ENCODE measurements at regions of chr1 and their contacts with region 1.

Region 1: DNA sequence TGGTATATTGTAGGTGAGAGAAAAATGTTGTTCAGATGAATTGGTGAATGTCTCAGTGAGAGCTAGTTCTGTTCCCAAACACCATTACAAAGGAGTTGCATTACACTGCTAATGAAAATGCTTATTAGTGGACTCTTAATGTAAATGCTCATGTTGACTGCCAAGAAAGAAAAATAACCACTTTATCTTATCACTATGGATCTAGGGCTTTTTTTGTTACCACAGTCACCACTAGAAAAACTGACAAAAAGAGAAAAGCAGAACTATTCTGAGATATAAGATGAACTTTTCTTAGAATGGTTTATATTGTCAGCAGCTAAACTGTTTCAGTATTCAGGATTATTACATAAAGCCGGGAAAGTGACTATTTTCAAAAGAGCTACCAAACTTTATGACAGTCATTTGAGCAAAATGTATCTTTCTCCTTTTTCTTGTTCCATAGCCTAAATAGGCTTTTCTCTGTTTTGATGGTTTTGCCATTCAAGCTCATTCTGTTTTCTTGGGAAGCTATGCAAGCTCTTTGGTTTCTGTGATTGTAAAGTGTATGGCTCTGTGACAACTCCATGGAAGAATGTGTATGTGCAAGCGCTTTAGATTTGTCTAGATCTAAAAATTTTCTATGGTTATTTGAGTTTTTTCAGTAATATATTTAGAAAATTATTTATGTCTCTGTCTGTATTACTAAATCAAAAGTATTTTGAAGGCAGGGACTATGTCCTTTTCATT is 64.2 kb upstream of the DPH5 start:
- DNase-seq: no peak
- H3K4me3 ChIP-seq: no peak overlapping the region
- H3K4me3 Mint-ChIP-seq: no peak overlapping the region
- H3K27ac ChIP-seq: no peak overlapping the region
- H3K27ac Mint-ChIP-seq: peak overlapping the region in 6 of 8 donors; percentile 0 to 70 (median 14)
- H3K4me1 ChIP-seq: peaks cover 7% of the 10 kb centered on the region
- H3K4me1 Mint-ChIP-seq: peaks cover 6 to 35% (median 18%) of the 10 kb centered on the region in 3 donors
- H3K27me3 ChIP-seq: no peaks in the 10 kb centered on the region
- H3K27me3 Mint-ChIP-seq: no peaks in the 10 kb centered on the region

Region 2: DNA sequence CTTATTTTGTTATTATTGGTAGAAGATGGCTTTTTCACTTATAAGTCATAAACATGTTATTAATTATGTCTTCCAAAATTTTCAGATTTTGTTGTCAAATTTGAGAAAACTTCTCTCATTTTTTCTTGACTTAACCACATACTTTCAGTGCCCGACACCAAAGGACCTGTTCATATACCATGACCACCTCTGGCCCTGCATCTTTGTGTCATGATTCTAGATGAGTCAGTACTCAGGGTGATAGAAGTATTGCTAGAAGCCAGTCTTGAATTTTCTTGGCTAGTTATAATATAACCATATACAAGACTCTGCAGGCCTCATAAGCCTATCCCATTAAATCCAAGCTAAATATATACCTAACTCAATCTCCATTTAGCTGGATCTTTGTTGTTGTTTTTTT is 28.8 kb before region 1 on chr1:
- CTCF ChIA-PET with region 1: no interaction called
- POLR2A ChIA-PET with region 1: no interaction called
- DNase-seq: no peak
- H3K4me3 ChIP-seq: no peak overlapping the region
- H3K4me3 Mint-ChIP-seq: no peak overlapping the region
- H3K27ac ChIP-seq: no peak overlapping the region
- H3K27ac Mint-ChIP-seq: no peak overlapping the region
- H3K4me1 ChIP-seq: peaks cover 4% of the 10 kb centered on the region
- H3K4me1 Mint-ChIP-seq: peaks cover 24 to 48% (median 36%) of the 10 kb centered on the region in 3 donors
- H3K27me3 ChIP-seq: no peaks in the 10 kb centered on the region
- H3K27me3 Mint-ChIP-seq: peaks cover 0 to 2% of the 10 kb centered on the region in 2 donors

Region 3: DNA sequence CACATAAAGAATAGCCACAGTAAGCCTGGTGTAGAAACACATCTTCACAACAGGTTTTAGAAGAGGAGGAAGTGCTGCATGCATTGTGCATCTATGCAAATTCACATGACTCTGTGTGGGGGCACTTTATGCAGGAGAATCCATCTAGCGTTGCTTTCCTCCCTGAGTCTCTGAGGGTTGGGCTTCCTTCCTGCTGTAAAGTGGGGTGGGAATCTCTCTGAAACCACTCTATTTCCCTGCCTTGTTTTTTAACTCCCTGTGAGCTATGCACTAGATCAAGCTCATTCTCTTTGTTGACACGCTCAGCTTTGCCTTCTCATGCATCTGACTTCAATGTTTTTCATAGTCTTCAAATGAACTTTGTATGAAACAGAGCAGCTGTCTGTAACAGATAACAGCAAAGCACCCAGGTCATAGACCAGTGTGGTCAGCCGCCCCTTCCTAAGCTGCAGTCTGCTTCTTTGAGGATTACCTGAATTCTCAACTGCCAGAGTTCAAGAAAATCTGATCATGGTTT is 38.5 kb after region 1 on chr1:
- CTCF ChIA-PET with region 1: no interaction called
- POLR2A ChIA-PET with region 1: interaction called, 11 read pairs
- DNase-seq: peak in 2 of 5 donors; percentile 24 to 72
- H3K4me3 ChIP-seq: peak overlapping the region; percentile 17
- H3K4me3 Mint-ChIP-seq: peak overlapping the region; percentile 15 to 82 (median 68)
- H3K27ac ChIP-seq: peak overlapping the region; percentile 26
- H3K27ac Mint-ChIP-seq: peak overlapping the region; percentile 82 to 97 (median 90)
- H3K4me1 ChIP-seq: peaks cover 53% of the 10 kb centered on the region
- H3K4me1 Mint-ChIP-seq: peaks cover 49 to 67% (median 67%) of the 10 kb centered on the region in 3 donors
- H3K27me3 ChIP-seq: no peaks in the 10 kb centered on the region
- H3K27me3 Mint-ChIP-seq: no peaks in the 10 kb centered on the region

Region 4: DNA sequence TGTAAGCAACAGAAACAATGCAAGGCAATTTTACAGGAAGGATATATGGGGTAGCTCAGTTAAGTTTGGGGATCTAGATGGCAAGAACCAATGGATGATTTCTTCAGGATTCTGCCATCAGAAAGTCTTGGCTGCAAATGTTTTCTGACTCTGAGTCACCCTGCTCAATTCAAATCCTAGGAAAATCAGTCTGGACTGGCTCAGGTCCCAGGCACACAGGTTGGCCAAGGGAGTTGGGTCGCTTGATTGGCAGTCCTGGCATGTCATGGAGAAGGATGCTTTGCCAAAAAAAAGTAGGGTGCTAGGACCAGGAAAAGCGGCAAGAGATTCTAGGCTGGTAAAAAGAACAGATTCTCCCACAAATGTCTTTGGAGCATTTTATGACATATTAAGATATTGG is 118.1 kb after region 1 on chr1:
- CTCF ChIA-PET with region 1: no interaction called
- POLR2A ChIA-PET with region 1: no interaction called
- DNase-seq: no peak
- H3K4me3 ChIP-seq: no peak overlapping the region
- H3K4me3 Mint-ChIP-seq: no peak overlapping the region
- H3K27ac ChIP-seq: no peak overlapping the region
- H3K27ac Mint-ChIP-seq: no peak overlapping the region
- H3K4me1 ChIP-seq: no peaks in the 10 kb centered on the region
- H3K4me1 Mint-ChIP-seq: no peaks in the 10 kb centered on the region
- H3K27me3 ChIP-seq: no peaks in the 10 kb centered on the region
- H3K27me3 Mint-ChIP-seq: no peaks in the 10 kb centered on the region

Region 5: DNA sequence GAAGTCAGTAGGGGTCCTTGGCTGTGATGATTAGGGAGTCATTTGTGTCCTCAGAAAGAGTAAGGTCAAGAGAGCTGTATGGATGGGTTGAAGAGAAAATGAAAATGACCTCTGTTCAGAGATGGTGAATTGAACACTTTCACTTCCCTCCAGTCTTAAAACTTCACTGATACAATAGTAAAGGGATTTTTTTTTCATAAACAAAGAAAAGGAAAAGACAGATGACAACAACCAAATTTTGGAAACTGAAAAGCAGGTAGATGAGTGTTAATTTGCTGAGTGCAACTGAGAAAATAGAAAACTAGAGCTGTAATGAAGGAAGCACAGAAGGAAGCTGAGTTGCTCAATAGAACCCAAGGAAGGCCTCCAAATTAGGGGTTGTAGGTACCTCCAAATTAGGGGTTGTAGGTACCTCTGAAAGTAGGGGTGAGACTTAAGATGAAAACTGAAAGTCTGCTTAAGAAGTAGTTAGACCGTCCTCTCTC is 132.2 kb after region 1 on chr1:
- CTCF ChIA-PET with region 1: no interaction called
- POLR2A ChIA-PET with region 1: no interaction called
- DNase-seq: no peak
- H3K4me3 ChIP-seq: no peak overlapping the region
- H3K4me3 Mint-ChIP-seq: peak overlapping the region in 6 of 7 donors; percentile 44 to 84 (median 56)
- H3K27ac ChIP-seq: no peak overlapping the region
- H3K27ac Mint-ChIP-seq: peak overlapping the region in 6 of 8 donors; percentile 16 to 95 (median 49)
- H3K4me1 ChIP-seq: no peaks in the 10 kb centered on the region
- H3K4me1 Mint-ChIP-seq: peaks cover 11 to 17% (median 15%) of the 10 kb centered on the region in 3 donors
- H3K27me3 ChIP-seq: no peaks in the 10 kb centered on the region
- H3K27me3 Mint-ChIP-seq: peaks cover 0 to 1% of the 10 kb centered on the region in 2 donors